PC-3 (cell line): ENCODE measurements at regions of chr4 and their contacts with region 1.

Region 1: DNA sequence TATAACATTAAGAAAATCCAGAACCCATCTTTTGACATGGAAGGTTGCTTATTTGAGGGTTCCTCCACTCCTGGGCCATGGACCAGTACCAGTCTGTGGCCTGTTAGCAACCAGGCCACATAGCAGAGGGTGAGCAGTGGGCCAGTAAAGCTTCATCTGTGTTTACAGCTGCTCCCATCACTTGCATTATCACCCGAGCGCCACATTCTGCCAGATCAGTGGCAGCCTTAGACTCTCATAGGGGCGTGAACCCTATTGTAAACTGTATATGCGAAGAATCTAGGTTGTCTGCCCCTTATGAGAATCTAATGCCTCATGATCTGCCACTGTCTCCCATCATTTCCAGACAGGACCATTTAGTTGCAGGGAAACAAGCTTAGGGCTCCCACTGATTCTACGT is 58.6 kb downstream of the NDST4 start:
- DNase-seq: no peak
- ATAC-seq: no peak
- H3K4me3 ChIP-seq: no peak overlapping the region
- H3K27ac ChIP-seq: no peak overlapping the region
- H3K4me1 ChIP-seq: no peaks in the 10 kb centered on the region
- H3K27me3 ChIP-seq: no peaks in the 10 kb centered on the region
- CTCF ChIP-seq: no peak

Region 2: GRCh38 chr4:114807759-114808404 is 247.0 kb before region 1 on chr4:
- CTCF ChIA-PET with region 1: no interaction called
- POLR2A ChIA-PET with region 1: no interaction called
- intact Hi-C with region 1: loop called (anchors 10 kb)
- DNase-seq: peak; percentile 61
- ATAC-seq: peak; percentile 75
- H3K4me3 ChIP-seq: peak overlapping the region; percentile 51; the same call in 1 of the 2 replicates
- H3K27ac ChIP-seq: no peak overlapping the region
- H3K4me1 ChIP-seq: no peaks in the 10 kb centered on the region; the same call in 1 of the 2 replicates
- H3K27me3 ChIP-seq: no peaks in the 10 kb centered on the region
- CTCF ChIP-seq: peak; percentile 83

Region 3: DNA sequence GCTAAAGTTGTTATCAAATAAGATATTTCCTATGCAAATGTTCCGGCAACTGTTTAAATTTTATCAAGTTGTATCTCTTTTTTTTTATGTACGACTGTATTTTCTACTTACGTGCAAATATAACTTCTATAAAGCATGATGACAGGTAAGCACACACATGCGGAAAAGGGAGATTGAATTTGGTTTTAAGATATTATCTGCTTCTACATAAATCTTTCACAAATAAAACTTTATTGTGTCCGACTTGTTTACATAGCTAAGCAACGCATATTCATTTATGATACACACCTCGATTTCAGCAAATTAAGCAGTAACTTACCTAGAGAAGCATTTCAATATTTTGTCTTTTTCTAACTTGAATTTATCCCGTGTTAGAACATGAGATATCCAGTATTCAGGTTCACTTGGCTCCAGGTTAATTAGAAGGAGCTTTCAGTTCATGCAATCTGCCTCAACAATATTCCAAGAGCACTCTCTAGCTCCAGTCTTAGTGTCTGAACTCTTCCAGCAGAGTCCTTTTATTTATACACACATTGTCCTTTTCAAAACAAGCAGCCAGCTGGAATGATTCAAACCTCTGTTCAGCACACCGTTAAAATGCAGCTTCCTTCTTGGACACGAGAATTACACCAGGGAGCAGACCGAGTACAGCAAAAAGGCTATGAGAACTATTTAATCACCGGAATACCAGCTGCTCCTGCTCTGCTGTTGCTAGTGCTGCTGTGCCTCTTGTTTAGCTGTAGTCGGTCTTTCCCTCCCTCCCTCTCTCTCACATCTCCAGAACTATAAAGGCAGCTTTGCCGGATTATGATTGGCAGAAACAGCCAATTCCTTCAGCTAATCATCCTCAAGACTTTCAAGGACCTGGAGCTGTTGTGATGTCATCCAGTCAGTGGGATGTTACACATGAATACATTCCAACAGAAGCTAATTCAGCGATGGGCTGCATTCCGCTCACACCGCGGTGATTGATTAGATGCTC is 58.6 kb after region 1 on chr4 and contains the start of gene NDST4:
- CTCF ChIA-PET with region 1: no interaction called
- POLR2A ChIA-PET with region 1: no interaction called
- intact Hi-C with region 1: no loop called
- DNase-seq: peak; percentile 36
- ATAC-seq: peak; percentile 83
- H3K4me3 ChIP-seq: peak within 1 kb of the TSS; percentile 62
- H3K27ac ChIP-seq: peak within 1 kb of the TSS; percentile 14; the same call in 1 of the 2 replicates
- H3K4me1 ChIP-seq: peaks cover 12% of the 10 kb centered on the region; the same call in 1 of the 2 replicates
- H3K27me3 ChIP-seq: peaks cover 15% of the 10 kb centered on the region
- CTCF ChIP-seq: no peak
- total RNA-seq, gene NDST4: not detected in 2 replicates